ENCODE measurements at regions of chr21 and their contacts with region 1.

Region 1: DNA sequence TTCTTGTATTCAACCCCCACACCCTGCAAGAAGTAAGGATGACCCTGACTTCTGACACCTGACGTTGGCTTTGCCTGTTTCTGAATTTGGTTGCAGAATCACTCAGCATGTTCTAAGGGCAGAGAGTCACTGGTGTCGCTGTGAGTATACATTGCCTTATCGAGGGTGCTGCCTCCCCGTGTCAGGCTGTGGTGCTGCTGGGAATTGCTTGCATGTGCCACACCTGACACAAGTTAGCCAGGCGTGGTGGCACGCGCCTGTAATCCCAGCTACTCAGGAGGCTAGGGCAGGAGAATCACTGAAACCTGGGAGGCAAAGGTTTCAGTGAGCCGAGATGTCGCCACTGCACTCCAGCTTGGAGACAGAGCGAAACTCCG is 45.9 kb downstream of the WDR4 start:
- DNase-seq: peak; percentile 48 to 61 (median 57)
- H3K4me3 ChIP-seq: peak overlapping the region in 1 of 2 donors; percentile 26
- H3K4me3 Mint-ChIP-seq: peak overlapping the region; percentile 68 to 93 (median 84)
- H3K27ac ChIP-seq: no peak overlapping the region
- H3K27ac Mint-ChIP-seq: peak overlapping the region; percentile 23 to 76 (median 35)
- H3K4me1 ChIP-seq: peaks cover 33% of the 10 kb centered on the region
- H3K4me1 Mint-ChIP-seq: peaks cover 24 to 33% (median 28%) of the 10 kb centered on the region in 4 donors
- H3K27me3 ChIP-seq: no peaks in the 10 kb centered on the region
- H3K27me3 Mint-ChIP-seq: peaks cover 0 to 2% of the 10 kb centered on the region in 2 donors

Region 2: DNA sequence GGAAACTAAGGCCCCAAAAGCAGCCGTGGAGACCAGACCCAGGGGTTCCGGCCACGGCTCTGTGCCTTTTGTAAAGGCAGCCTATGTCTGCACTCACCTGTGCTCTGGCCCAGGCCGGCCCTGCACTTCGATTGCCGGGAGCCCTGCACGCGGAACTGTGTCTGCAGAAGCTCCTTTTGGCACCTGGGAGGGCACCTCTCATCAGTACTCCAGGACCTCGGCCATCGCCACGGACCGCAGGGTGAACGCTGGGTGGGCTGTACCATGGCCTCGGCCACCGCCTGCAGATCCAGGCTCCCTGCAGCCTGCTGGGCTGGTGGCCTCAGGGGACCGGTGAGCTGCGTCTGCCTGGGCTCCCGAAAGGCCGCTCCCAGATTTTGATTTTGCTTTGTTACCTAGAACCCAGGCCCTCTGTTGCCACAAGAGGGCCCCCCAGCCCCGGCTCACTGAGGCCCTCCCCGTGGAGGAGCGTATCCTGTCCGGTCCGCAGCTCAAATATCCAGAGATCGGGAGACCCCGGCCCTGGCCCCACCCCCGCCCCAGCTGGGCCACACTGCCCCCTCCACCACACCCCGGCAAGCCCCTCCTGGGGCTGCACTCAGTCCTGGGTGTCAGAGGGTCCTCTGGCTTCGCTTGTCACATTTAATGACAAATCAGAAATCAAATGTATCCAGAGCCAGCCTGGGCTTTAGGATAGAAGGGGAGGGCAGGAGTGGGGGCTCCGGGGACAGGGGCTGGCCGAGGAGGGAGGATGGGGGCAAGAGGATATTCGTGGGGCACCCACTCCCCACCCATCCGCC is 240.2 kb before region 1 on chr21:
- CTCF ChIA-PET with region 1: interaction called, 7 read pairs
- POLR2A ChIA-PET with region 1: interaction called, 4 read pairs
- intact Hi-C with region 1: loop called (anchors 5 kb)
- DNase-seq: peak; percentile 52 to 68 (median 66)
- H3K4me3 ChIP-seq: no peak overlapping the region
- H3K4me3 Mint-ChIP-seq: no peak overlapping the region
- H3K27ac ChIP-seq: no peak overlapping the region
- H3K27ac Mint-ChIP-seq: peak overlapping the region in 1 of 7 donors; percentile 57
- H3K4me1 ChIP-seq: peaks cover 14% of the 10 kb centered on the region
- H3K4me1 Mint-ChIP-seq: peaks cover 0 to 9% (median 6%) of the 10 kb centered on the region in 4 donors
- H3K27me3 ChIP-seq: no peaks in the 10 kb centered on the region
- H3K27me3 Mint-ChIP-seq: peaks cover 0 to 2% of the 10 kb centered on the region in 2 donors

Region 3: GRCh38 chr21:42614811-42615659 is 218.4 kb before region 1 on chr21:
- CTCF ChIA-PET with region 1: no interaction called
- POLR2A ChIA-PET with region 1: no interaction called
- intact Hi-C with region 1: loop called (anchors 5 kb)
- DNase-seq: peak; percentile 58 to 78 (median 68)
- H3K4me3 ChIP-seq: peak overlapping the region in 1 of 2 donors; percentile 37
- H3K4me3 Mint-ChIP-seq: no peak overlapping the region
- H3K27ac ChIP-seq: peak overlapping the region; percentile 53
- H3K27ac Mint-ChIP-seq: no peak overlapping the region
- H3K4me1 ChIP-seq: peaks cover 35% of the 10 kb centered on the region
- H3K4me1 Mint-ChIP-seq: peaks cover 3 to 17% (median 7%) of the 10 kb centered on the region in 4 donors
- H3K27me3 ChIP-seq: no peaks in the 10 kb centered on the region
- H3K27me3 Mint-ChIP-seq: peaks cover 0 to 4% of the 10 kb centered on the region in 2 donors

Region 4: GRCh38 chr21:42652527-42653230 is 180.7 kb before region 1 on chr21:
- CTCF ChIA-PET with region 1: no interaction called
- POLR2A ChIA-PET with region 1: interaction called, 4 read pairs
- intact Hi-C with region 1: loop called (anchors 1 kb)
- DNase-seq: no peak
- H3K4me3 ChIP-seq: no peak overlapping the region
- H3K4me3 Mint-ChIP-seq: peak overlapping the region; percentile 41 to 93 (median 75)
- H3K27ac ChIP-seq: no peak overlapping the region
- H3K27ac Mint-ChIP-seq: peak overlapping the region in 5 of 7 donors; percentile 22 to 61 (median 46)
- H3K4me1 ChIP-seq: peaks cover 20% of the 10 kb centered on the region
- H3K4me1 Mint-ChIP-seq: peaks cover 7 to 39% (median 14%) of the 10 kb centered on the region in 4 donors
- H3K27me3 ChIP-seq: peaks cover 12% of the 10 kb centered on the region
- H3K27me3 Mint-ChIP-seq: peaks cover 4 to 5% of the 10 kb centered on the region in 2 donors

Region 5: GRCh38 chr21:42811960-42812359 is 21.5 kb before region 1 on chr21:
- CTCF ChIA-PET with region 1: no interaction called
- POLR2A ChIA-PET with region 1: no interaction called
- intact Hi-C with region 1: no loop called
- DNase-seq: no peak
- H3K4me3 ChIP-seq: no peak overlapping the region
- H3K4me3 Mint-ChIP-seq: no peak overlapping the region
- H3K27ac ChIP-seq: no peak overlapping the region
- H3K27ac Mint-ChIP-seq: peak overlapping the region in 1 of 7 donors; percentile 45
- H3K4me1 ChIP-seq: no peaks in the 10 kb centered on the region
- H3K4me1 Mint-ChIP-seq: no peaks in the 10 kb centered on the region
- H3K27me3 ChIP-seq: no peaks in the 10 kb centered on the region
- H3K27me3 Mint-ChIP-seq: peaks cover 2 to 4% of the 10 kb centered on the region in 2 donors

Region 6: GRCh38 chr21:42913476-42913875 is 80.0 kb after region 1 on chr21:
- CTCF ChIA-PET with region 1: no interaction called
- POLR2A ChIA-PET with region 1: no interaction called
- intact Hi-C with region 1: no loop called
- DNase-seq: no peak
- H3K4me3 ChIP-seq: no peak overlapping the region
- H3K4me3 Mint-ChIP-seq: no peak overlapping the region
- H3K27ac ChIP-seq: no peak overlapping the region
- H3K27ac Mint-ChIP-seq: peak overlapping the region in 2 of 7 donors; percentile 19 to 50
- H3K4me1 ChIP-seq: no peaks in the 10 kb centered on the region
- H3K4me1 Mint-ChIP-seq: peaks cover 0 to 2% (median under 1%) of the 10 kb centered on the region in 4 donors
- H3K27me3 ChIP-seq: no peaks in the 10 kb centered on the region
- H3K27me3 Mint-ChIP-seq: no peaks in the 10 kb centered on the region

Measured in CD4-positive, alpha-beta memory T cell (primary cell).